ENCODE measurements at regions of chr3 and their contacts with region 1.

Region 1: GRCh38 chr3:69161587-69162307 is 39.4 kb upstream of the LMOD3 start:
- DNase-seq: no peak
- H3K4me3 ChIP-seq: no peak overlapping the region
- H3K27ac ChIP-seq: no peak overlapping the region
- H3K4me1 ChIP-seq: no peaks in the 10 kb centered on the region
- H3K27me3 ChIP-seq: no peaks in the 10 kb centered on the region
- CTCF ChIP-seq: peak; percentile 92 to 98 (median 94)
- POLR2A ChIP-seq: no peak

Region 2: GRCh38 chr3:68103811-68104210 is 1057.9 kb before region 1 on chr3:
- intact Hi-C with region 1: no loop called
- DNase-seq: no peak
- H3K4me3 ChIP-seq: no peak overlapping the region
- H3K27ac ChIP-seq: no peak overlapping the region
- H3K4me1 ChIP-seq: no peaks in the 10 kb centered on the region
- H3K27me3 ChIP-seq: no peaks in the 10 kb centered on the region
- CTCF ChIP-seq: no peak
- POLR2A ChIP-seq: no peak

Region 3: DNA sequence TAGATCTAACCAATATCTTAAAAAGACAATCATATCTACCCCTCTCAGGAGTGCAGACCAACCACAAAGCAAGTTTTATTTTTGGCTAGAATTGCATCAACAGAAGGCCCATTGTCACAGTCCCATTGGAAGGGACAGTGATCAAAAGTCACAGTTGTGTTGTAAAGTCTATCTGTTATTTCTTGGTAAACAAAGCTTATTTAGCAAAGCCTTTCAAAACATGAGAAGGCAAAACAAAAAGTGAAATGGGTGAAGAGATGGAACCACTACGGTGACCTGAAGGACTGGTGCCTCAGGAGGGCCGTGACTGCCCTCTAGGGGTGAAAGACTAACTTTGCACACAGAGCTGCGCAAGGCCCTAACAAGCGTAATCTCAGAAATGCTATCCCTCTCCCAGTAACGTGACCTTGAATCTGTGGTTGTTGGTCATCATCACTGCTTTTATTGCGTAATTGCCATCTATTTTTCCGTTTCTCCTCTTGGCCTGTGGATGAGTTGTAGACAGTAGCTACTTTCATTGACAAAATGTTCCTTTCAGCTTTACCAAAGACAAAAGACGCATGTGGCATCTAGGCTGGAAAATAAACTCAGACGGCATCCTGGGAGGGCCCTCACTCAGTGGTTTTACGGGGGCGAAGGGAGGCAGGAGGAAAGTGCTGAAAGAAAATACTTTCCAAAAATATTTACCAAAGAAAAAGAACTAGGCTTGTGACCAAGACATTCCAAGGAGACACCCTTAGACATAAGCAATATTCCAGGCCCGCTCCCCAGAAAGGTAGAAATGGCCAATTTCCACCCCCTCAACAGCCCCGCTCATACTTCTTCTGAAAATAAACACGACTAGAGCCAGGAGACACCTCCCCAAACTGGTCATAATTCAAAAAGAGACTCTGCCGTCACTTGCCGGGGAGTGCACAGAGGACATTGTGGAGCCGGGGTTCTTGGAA is 144.8 kb after region 1 on chr3:
- intact Hi-C with region 1: loop called (anchors 10 kb)
- DNase-seq: peak; percentile 60 to 61
- H3K4me3 ChIP-seq: no peak overlapping the region
- H3K27ac ChIP-seq: peak overlapping the region; percentile 54 to 74
- H3K4me1 ChIP-seq: no peaks in the 10 kb centered on the region
- H3K27me3 ChIP-seq: no peaks in the 10 kb centered on the region
- CTCF ChIP-seq: peak; percentile 74 to 94 (median 92)
- POLR2A ChIP-seq: no peak